Panc1 (cell line): ENCODE measurements at regions of chr2 and their contacts with region 1.

Region 1: DNA sequence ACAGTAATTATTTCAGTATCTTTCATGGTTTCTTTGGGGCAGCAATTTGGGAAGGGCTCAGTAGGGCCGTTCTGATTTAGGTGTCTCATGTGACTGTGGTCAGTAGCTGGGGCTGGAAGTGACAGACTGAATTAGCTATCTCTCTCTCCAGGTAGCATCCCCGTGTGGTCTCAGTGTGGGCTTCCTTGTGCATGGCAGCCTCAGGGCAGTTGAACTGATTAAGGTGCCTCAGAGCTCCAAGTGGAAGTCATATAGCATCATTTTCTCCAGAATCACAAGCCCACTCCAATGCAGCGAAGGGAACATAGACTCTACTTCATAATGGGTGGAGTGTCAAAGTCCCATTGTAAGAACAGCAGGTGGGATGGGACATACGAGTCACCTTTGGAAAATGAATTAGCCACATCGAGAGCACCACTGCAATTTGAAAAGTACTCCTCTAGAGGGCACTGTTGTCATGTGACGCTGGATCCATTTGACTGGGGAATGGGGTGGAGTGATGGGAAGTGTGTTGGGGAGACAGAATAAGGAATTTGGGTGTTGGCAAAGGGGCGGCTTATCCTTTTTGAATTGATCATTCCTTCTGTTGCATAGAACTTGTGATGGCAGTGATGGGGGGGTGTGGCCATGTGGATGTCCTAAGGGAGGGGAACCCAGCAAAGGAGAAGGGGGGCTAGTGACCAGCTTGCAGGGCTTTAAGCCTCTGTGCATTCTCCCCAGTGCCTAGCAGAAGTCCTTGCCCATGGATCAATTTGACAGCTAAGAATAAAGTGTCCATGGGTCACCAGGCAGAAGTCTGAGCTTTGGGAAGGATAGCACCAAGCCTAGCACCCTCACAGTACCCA is 39.3 kb upstream of the FAM136A start:
- DNase-seq: peak; percentile 39
- ATAC-seq: peak; percentile 89
- H3K4me3 ChIP-seq: no peak overlapping the region
- H3K27ac ChIP-seq: no peak overlapping the region
- H3K4me1 ChIP-seq: no peaks in the 10 kb centered on the region
- H3K27me3 ChIP-seq: peaks cover 11% of the 10 kb centered on the region
- CTCF ChIP-seq: peak; percentile 88

Region 2: DNA sequence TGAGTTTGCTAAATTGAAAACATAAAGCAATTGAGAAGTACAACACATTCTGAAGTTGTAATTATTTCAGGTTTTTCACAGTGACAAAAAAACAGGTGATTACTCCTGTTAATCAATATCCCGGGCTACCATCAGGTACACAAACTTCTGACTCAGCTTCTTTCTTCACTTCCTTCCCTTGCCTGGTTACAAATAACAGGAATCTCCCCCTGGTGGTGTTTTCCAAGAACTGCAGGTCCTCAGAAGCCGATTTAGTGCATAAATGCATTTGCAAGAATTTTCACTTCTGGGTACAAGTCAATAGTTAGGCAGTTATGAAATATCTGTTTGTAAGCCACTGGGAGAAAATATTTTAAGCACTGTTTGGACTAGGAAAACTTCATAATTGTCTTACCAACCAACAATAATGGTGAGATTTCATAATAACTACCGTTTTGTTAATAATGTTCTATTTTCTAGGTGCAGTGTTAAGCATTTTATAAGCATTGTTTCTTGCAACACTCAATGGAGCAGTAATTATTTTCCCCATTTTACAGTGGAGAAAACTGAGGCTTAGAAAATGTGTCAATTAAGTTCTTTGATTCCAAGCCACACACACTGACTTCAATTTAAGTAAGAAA is 524.1 kb before region 1 on chr2:
- CTCF ChIA-PET with region 1: interaction called, 12 read pairs
- POLR2A ChIA-PET with region 1: no interaction called
- in situ Hi-C with region 1: no loop called
- intact Hi-C with region 1: no loop called
- DNase-seq: peak; percentile 75
- ATAC-seq: peak; percentile 85; the same call in 1 of the 2 replicates
- H3K4me3 ChIP-seq: no peak overlapping the region
- H3K27ac ChIP-seq: no peak overlapping the region
- H3K4me1 ChIP-seq: no peaks in the 10 kb centered on the region
- H3K27me3 ChIP-seq: no peaks in the 10 kb centered on the region
- CTCF ChIP-seq: peak; percentile 81; the same call in 1 of the 2 replicates

Region 3: DNA sequence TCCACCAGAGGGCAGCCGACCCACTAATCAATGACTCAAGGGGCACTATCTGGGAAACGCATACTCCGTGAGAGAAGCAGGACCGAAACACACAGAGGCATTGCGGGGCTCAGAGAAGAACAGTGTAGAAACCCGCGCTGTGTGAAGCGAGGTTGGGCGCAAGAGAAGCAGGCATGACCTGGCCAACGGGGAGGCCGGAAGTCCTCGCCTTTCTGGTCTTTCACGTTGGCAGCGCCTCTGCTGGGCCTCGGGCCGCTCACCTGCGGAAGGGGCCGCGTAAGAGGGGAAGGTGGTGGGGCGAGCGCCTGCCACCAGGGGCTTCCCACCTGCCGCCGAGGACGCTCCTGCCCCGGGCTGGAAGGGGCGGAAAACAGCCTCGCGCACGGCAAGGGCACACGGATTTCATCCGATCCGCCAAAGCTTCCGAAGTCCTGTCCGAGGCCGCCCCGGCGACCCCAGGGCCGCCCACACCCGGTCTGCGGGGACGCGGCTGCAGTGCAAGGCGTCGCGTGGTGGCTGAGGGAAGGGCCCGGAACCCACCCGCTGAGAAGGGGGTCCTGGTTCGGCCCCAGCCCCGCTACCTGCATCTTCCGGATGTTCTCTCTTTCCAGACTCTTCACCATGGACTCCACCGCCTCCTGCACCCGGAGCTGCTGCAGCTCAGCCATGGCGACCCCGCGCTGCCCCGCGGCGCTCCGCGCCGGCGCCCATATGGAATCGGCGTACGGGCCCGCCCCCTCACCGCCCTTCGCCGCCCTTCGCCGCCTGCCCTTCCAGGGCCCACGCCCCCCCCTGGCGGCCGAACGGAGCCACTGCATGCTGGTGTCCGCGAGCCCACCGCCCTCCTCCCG is 39.6 kb before region 1 on chr2 and contains the start of gene FAM136A:
- CTCF ChIA-PET with region 1: interaction called, 12 read pairs
- POLR2A ChIA-PET with region 1: no interaction called
- in situ Hi-C with region 1: no loop called
- intact Hi-C with region 1: no loop called
- DNase-seq: no peak
- ATAC-seq: peak; percentile 95
- H3K4me3 ChIP-seq: peak within 1 kb of the TSS; percentile 71 to 88
- H3K27ac ChIP-seq: peak within 1 kb of the TSS; percentile 82
- H3K4me1 ChIP-seq: peaks cover 5% of the 10 kb centered on the region
- H3K27me3 ChIP-seq: no peaks in the 10 kb centered on the region
- CTCF ChIP-seq: peak; percentile 98
- total RNA-seq, gene FAM136A: 53.4 TPM

Region 4: GRCh38 chr2:70616168-70616694 is 275.1 kb after region 1 on chr2:
- CTCF ChIA-PET with region 1: no interaction called
- POLR2A ChIA-PET with region 1: no interaction called
- in situ Hi-C with region 1: no loop called
- intact Hi-C with region 1: loop called (anchors 1 kb)
- DNase-seq: no peak
- ATAC-seq: no peak
- H3K4me3 ChIP-seq: no peak overlapping the region
- H3K27ac ChIP-seq: no peak overlapping the region
- H3K4me1 ChIP-seq: no peaks in the 10 kb centered on the region
- H3K27me3 ChIP-seq: peaks cover 10% of the 10 kb centered on the region
- CTCF ChIP-seq: no peak

Region 5: DNA sequence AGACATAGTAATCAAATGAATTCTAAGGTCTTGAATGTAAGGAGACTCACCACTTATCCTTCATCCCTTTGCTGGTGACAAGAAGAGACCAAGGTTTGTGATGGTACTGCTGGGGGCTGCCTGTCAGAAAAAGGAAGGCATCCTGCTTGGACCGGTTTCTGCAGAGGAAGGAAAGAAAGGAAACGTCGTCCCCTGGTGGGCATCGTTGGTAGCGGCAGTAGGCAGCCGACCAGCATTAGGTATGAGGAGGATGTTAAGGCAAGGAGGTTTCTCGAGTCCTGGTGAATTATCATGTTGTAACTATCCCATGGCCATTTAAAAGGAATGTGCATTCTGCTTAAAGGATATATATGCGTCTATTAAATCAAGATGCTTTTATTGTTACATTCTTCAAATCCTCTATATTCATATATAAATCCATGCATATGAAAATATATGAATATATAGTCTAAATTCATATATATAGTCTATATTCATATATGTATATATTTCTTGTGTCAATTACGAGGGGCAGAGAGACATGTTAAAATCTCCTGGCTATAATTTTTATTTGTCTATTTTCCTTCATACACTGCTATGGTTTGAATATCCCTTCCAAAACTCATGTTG is 306.8 kb after region 1 on chr2:
- CTCF ChIA-PET with region 1: no interaction called
- POLR2A ChIA-PET with region 1: no interaction called
- in situ Hi-C with region 1: no loop called
- intact Hi-C with region 1: loop called (anchors 10 kb)
- DNase-seq: peak; percentile 72
- ATAC-seq: peak; percentile 82
- H3K4me3 ChIP-seq: no peak overlapping the region
- H3K27ac ChIP-seq: no peak overlapping the region
- H3K4me1 ChIP-seq: no peaks in the 10 kb centered on the region
- H3K27me3 ChIP-seq: peaks cover 7% of the 10 kb centered on the region
- CTCF ChIP-seq: peak; percentile 99